ENCODE measurements at regions of chr1 and their contacts with region 1.

Region 1: GRCh38 chr1:204188982-204189646 is 7.2 kb downstream of the KISS1 start:
- DNase-seq: peak in 3 of 9 experiments; percentile 23 to 61 (median 40)
- ATAC-seq: peak; percentile 36
- H3K4me3 ChIP-seq: no peak overlapping the region
- H3K4me3 Mint-ChIP-seq: no peak overlapping the region
- H3K27ac ChIP-seq: no peak overlapping the region
- H3K27ac Mint-ChIP-seq: peak overlapping the region; percentile 10
- H3K4me1 ChIP-seq: no peaks in the 10 kb centered on the region
- H3K4me1 Mint-ChIP-seq: peaks cover 24% of the 10 kb centered on the region
- H3K27me3 ChIP-seq: peaks cover 3 to 4% of the 10 kb centered on the region in 2 experiments
- H3K27me3 Mint-ChIP-seq: peaks cover 45% of the 10 kb centered on the region
- CTCF ChIP-seq: no peak

Region 2: GRCh38 chr1:204207136-204207616 is 18.1 kb after region 1 on chr1:
- CTCF ChIA-PET with region 1: interaction called, 9 read pairs
- POLR2A ChIA-PET with region 1: no interaction called
- intact Hi-C with region 1: loop called in 1 of 2 experiments (anchors 1 kb)
- DNase-seq: peak; percentile 56 to 84 (median 72)
- ATAC-seq: peak; percentile 96
- H3K4me3 ChIP-seq: no peak overlapping the region
- H3K4me3 Mint-ChIP-seq: no peak overlapping the region
- H3K27ac ChIP-seq: no peak overlapping the region
- H3K27ac Mint-ChIP-seq: no peak overlapping the region
- H3K4me1 ChIP-seq: peaks cover 12% of the 10 kb centered on the region
- H3K4me1 Mint-ChIP-seq: peaks cover 11% of the 10 kb centered on the region
- H3K27me3 ChIP-seq: no peaks in the 10 kb centered on the region
- H3K27me3 Mint-ChIP-seq: peaks cover 29% of the 10 kb centered on the region
- CTCF ChIP-seq: peak; percentile 73

Measured in CD8-positive, alpha-beta T cell (primary cell).